ENCODE measurements at regions of chr15 and their contacts with region 1.

Region 1: GRCh38 chr15:90557186-90558084 is 27.7 kb downstream of the CRTC3 start:
- DNase-seq: no peak
- ATAC-seq: peak; percentile 68
- H3K4me3 ChIP-seq: peak overlapping the region in 2 of 3 experiments; percentile 10 to 16; a peak in 1 of 6 replicates
- H3K27ac ChIP-seq: peak overlapping the region; percentile 72
- H3K4me1 ChIP-seq: peaks cover 61% of the 10 kb centered on the region
- H3K27me3 ChIP-seq: no peaks in the 10 kb centered on the region
- CTCF ChIP-seq: no peak
- EP300 ChIP-seq: no peak
- POLR2A ChIP-seq: no peak
- RAD21 ChIP-seq: no peak

Region 2: GRCh38 chr15:90529371-90530249 is 27.8 kb before region 1 on chr15 and contains the start of gene CRTC3:
- CTCF ChIA-PET with region 1: no interaction called
- POLR2A ChIA-PET with region 1: interaction called, 3 read pairs
- in situ Hi-C with region 1: no loop called
- intact Hi-C with region 1: loop called (anchors 2 kb)
- DNase-seq: no peak
- ATAC-seq: peak; percentile 86
- H3K4me3 ChIP-seq: peak within 1 kb of the TSS; percentile 81 to 89 (median 86)
- H3K27ac ChIP-seq: peak within 1 kb of the TSS; percentile 51
- H3K4me1 ChIP-seq: peaks cover 31% of the 10 kb centered on the region
- H3K27me3 ChIP-seq: peaks cover 0 to 8% of the 10 kb centered on the region in 2 experiments; a peak in 2 of 5 replicates
- CTCF ChIP-seq: 0 out of 2 replicates have a peak, but pooled peaks have one; percentile 27
- EP300 ChIP-seq: no peak
- POLR2A ChIP-seq: peak in 1 of 2 experiments; percentile 26; a peak in 1 of 4 replicates
- RAD21 ChIP-seq: peak; percentile 20; the same call in 1 of the 2 replicates
- total RNA-seq, gene CRTC3: 6.0 and 8.4 TPM in 2 replicates

Region 3: GRCh38 chr15:90571063-90571541 is 13.7 kb after region 1 on chr15:
- CTCF ChIA-PET with region 1: no interaction called
- POLR2A ChIA-PET with region 1: no interaction called
- in situ Hi-C with region 1: no loop called
- intact Hi-C with region 1: no loop called
- DNase-seq: no peak
- ATAC-seq: no peak
- H3K4me3 ChIP-seq: no peak overlapping the region
- H3K27ac ChIP-seq: no peak overlapping the region
- H3K4me1 ChIP-seq: no peaks in the 10 kb centered on the region
- H3K27me3 ChIP-seq: no peaks in the 10 kb centered on the region
- CTCF ChIP-seq: no peak
- EP300 ChIP-seq: no peak
- POLR2A ChIP-seq: no peak
- RAD21 ChIP-seq: no peak

Region 4: DNA sequence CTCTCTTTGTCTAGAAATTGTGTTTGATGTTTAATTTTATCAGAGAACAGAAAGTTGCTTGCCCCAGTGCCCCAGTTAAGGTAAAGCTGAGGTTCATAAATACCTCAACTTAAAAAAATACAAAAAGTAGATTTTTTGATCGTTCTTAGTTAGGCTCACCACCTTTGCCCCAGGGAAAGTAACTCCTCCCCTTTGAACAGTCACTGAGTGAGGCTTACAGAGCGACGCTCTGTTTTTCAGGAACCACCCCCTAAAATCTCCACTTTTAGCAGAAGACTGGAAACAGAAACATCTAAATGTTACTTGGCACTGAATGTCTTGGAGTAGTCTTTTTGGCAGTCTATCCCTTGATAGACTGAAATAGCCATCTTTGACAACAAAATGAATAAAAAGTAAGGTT is 184.7 kb after region 1 on chr15:
- CTCF ChIA-PET with region 1: no interaction called
- POLR2A ChIA-PET with region 1: no interaction called
- in situ Hi-C with region 1: no loop called
- intact Hi-C with region 1: no loop called
- DNase-seq: no peak
- ATAC-seq: no peak
- H3K4me3 ChIP-seq: no peak overlapping the region
- H3K27ac ChIP-seq: no peak overlapping the region
- H3K4me1 ChIP-seq: no peaks in the 10 kb centered on the region
- H3K27me3 ChIP-seq: no peaks in the 10 kb centered on the region
- CTCF ChIP-seq: no peak
- EP300 ChIP-seq: no peak
- POLR2A ChIP-seq: no peak
- RAD21 ChIP-seq: no peak

Measured in HepG2 (cell line).